Vagina (tissue), 2 donors: ENCODE measurements at regions of chr1 and their contacts with region 1.

Region 1: DNA sequence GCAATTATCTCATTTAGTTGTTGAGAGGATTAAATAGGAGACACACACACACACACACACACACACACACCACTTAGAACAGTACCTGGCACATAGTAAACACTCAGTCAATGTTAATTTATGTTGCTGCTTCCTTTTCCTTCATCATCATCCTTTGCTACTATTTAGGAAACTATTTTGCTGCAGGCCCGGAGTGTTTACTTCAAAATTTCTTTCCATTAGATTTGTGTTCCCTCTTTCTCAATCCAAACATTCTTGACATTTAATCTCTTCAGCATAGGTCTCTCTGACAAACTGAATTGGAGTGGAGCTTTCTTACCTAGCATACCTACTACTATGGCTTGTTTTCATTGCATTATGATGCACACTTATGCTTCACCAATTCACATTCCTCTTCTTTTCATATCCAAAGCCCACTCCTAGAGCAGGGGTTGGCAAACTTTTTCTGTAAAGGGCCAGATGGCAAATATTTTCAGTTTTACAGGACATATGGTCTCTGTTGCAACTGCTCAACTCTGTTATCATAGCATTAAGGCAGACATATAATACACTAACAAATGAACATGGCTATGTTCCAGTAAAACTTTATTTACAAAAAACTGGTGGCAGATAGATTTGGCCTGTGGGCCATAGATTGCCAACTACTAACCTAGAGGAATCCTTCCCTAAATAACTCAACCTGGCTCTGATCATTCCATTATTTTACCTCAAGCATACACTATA is 49.5 kb downstream of the SCMH1 start:
- DNase-seq: no peak
- H3K4me3 ChIP-seq: no peak overlapping the region
- H3K27ac ChIP-seq: no peak overlapping the region
- H3K4me1 ChIP-seq: peaks cover 6% of the 10 kb centered on the region
- H3K27me3 ChIP-seq: no peaks in the 10 kb centered on the region
- CTCF ChIP-seq: no peak
- POLR2A ChIP-seq: no peak

Region 2: GRCh38 chr1:41038105-41038504 is 154.5 kb before region 1 on chr1:
- intact Hi-C with region 1: no loop called
- DNase-seq: no peak
- H3K4me3 ChIP-seq: no peak overlapping the region
- H3K27ac ChIP-seq: no peak overlapping the region
- H3K4me1 ChIP-seq: no peaks in the 10 kb centered on the region
- H3K27me3 ChIP-seq: no peaks in the 10 kb centered on the region
- CTCF ChIP-seq: no peak
- POLR2A ChIP-seq: no peak

Region 3: DNA sequence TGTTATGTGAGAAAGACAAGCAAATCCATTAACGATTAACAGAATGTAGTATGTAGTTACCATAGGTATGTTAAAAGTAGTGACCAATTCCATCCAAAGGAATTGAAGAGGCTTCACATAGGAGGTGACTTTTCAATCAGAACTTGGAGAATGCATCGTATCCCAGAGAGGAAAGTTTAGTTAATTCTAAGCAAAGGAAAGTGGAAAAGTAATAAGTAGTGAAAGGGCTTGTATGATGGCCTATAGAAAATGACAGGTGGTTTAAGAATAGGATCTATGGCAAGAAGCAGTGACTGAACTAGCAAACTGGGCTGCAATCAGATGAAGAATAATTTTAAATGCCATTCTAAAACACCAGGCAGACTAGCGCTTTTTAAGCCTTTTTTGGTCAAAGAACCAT is 32.9 kb after region 1 on chr1:
- intact Hi-C with region 1: loop called (anchors 2 kb)
- DNase-seq: no peak
- H3K4me3 ChIP-seq: no peak overlapping the region
- H3K27ac ChIP-seq: no peak overlapping the region
- H3K4me1 ChIP-seq: peaks cover 12% of the 10 kb centered on the region
- H3K27me3 ChIP-seq: no peaks in the 10 kb centered on the region
- CTCF ChIP-seq: no peak
- POLR2A ChIP-seq: no peak